K562 (cell line): ENCODE measurements at regions of chr14 and their contacts with region 1.

Region 1: GRCh38 chr14:24232121-24232644 is at the start of gene NEDD8:
- DNase-seq: peak; percentile 78 to 86 (median 81)
- ATAC-seq: peak; percentile 88
- H3K4me3 ChIP-seq: peak within 1 kb of the TSS; percentile 54
- H3K27ac ChIP-seq: peak within 1 kb of the TSS; percentile 89
- H3K4me1 ChIP-seq: peaks cover 6 to 15% of the 10 kb centered on the region in 2 experiments
- H3K27me3 ChIP-seq: no peaks in the 10 kb centered on the region
- CTCF ChIP-seq: no peak
- EP300 ChIP-seq: no peak
- POLR2A ChIP-seq: peak; percentile 70
- RAD21 ChIP-seq: no peak
- polyA plus RNA-seq, gene NEDD8: 628 to 691 TPM

Region 2: DNA sequence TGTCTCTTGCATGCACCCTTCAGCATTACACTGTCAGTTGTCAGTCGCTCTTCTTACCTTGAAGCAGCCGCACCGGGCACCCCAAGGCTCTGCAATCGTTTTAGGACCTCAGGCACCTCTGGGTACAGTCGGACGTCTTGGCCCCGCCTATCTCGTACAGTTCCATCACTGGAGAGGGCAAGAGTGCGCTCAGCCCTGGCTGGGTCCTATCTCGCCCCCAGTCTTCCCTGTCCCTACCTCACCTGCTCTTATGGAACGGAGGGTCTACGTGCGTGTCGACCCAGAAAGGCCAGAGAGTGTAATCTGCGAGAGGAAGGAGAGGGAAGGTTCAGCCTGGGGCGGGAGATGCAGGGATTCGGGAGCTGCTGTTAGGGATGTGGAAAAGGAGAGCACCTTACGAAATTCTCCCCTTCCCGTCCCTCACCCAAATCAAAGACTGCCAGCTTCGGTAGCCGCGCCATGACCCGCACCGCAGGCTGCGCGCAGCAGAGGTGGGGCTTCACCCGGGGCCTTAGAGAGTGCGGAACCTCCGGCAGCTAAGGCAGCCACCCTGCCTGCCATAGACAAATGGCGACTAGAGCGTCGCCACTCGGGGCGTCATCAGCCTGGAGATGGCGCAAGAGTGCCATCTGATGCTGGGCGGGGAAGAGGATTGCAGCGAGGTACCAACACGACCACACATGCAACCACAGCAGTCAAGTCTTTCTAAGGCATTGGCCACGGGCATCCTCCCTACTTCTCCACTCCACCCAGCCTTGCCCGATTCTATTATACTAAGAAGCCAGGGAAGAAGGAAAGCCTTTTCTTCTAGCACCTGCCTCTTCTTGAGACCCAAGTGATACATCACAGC is 16.5 kb before region 1 on chr14 and contains the start of gene MDP1:
- CTCF ChIA-PET with region 1: no interaction called
- POLR2A ChIA-PET with region 1: interaction called, 3 read pairs
- in situ Hi-C with region 1: no loop called
- intact Hi-C with region 1: loop called (anchors 2 kb)
- DNase-seq: peak; percentile 75 to 89 (median 78)
- ATAC-seq: peak; percentile 87
- H3K4me3 ChIP-seq: peak within 1 kb of the TSS; percentile 62
- H3K27ac ChIP-seq: peak within 1 kb of the TSS; percentile 71
- H3K4me1 ChIP-seq: peaks cover 4 to 11% of the 10 kb centered on the region in 2 experiments; a peak in 4 of 5 replicates
- H3K27me3 ChIP-seq: no peaks in the 10 kb centered on the region
- CTCF ChIP-seq: peak; percentile 77 to 82 (median 79)
- EP300 ChIP-seq: peak; percentile 38; the same call in 1 of the 2 replicates
- POLR2A ChIP-seq: peak; percentile 86
- RAD21 ChIP-seq: peak; percentile 50 to 61
- polyA plus RNA-seq, gene MDP1: 27.2 to 29.6 TPM